Ascending aorta (tissue), 2 donors: ENCODE measurements at regions of chr12 and their contacts with region 1.

Region 1: GRCh38 chr12:53352331-53353256 is 16.4 kb upstream of the SP7 start:
- DNase-seq: peak; percentile 24 to 90
- H3K4me3 ChIP-seq: no peak overlapping the region
- H3K27ac ChIP-seq: no peak overlapping the region
- H3K4me1 ChIP-seq: no peaks in the 10 kb centered on the region
- H3K27me3 ChIP-seq: no peaks in the 10 kb centered on the region
- CTCF ChIP-seq: peak; percentile 81 to 87 (median 86)

Region 2: DNA sequence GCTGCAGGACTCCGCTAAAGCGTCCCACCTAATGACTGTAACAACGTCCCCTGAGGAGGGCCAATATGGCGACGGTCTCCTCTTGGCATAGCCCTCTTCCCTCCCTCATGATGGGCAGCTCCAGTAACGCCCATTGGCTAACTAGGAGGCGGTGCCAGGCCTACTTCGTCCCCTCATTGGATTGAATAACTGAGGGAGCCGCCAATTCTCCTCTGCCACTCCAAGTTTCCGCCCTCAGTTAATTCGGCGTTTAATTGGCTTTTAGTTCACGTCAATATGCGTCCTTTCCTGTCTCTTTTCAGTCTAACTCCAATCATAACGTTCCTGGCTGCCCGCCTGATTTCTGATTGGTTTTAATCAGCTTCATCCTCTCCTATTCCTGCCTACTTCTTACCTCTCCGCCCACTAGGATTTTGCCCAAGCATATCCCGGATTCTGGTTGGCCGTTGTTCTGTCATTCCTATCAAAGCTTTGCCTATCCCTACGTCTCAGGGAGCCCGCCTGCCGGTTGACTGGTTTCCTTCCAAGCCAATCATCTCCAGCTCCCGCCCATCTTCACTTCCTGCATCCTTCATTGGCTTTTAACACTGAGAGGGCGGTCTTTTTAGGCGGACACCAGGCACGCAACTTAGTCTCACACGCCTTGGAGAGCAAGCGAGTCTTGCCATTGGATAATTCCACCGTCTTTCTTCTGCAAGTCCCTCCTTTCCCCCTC is 27.0 kb after region 1 on chr12:
- intact Hi-C with region 1: loop called (anchors 2 kb)
- DNase-seq: peak; percentile 100
- H3K4me3 ChIP-seq: peak overlapping the region; percentile 86 to 87
- H3K27ac ChIP-seq: peak overlapping the region; percentile 95 to 99
- H3K4me1 ChIP-seq: peaks cover 23 to 37% of the 10 kb centered on the region in 2 donors
- H3K27me3 ChIP-seq: no peaks in the 10 kb centered on the region
- CTCF ChIP-seq: no peak

Region 3: GRCh38 chr12:53424626-53425514 is 72.3 kb after region 1 on chr12:
- intact Hi-C with region 1: loop called (anchors 1 kb)
- DNase-seq: no peak
- H3K4me3 ChIP-seq: peak overlapping the region in 1 of 2 donors; percentile 3
- H3K27ac ChIP-seq: no peak overlapping the region
- H3K4me1 ChIP-seq: no peaks in the 10 kb centered on the region
- H3K27me3 ChIP-seq: no peaks in the 10 kb centered on the region
- CTCF ChIP-seq: no peak

Region 4: DNA sequence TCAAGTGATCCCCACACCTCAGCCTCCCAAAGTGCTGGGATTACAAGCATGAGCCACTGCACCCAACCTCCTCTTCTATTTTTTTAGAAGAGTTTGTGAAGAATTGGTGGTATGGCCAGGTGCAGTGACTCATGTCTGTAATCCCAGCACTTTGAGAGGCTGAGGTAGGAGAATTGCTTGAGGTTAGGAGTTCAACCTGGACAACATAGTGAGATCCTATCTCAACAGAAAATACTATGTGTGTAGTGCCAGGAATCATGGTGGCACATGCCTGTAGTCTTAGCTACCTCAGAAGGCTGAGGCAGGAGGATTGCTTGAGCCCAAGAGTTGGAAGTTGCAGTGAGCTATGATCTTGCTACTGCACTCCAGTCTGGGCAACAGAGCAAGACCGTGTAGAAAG is 279.1 kb after region 1 on chr12:
- intact Hi-C with region 1: no loop called
- DNase-seq: no peak
- H3K4me3 ChIP-seq: no peak overlapping the region
- H3K27ac ChIP-seq: no peak overlapping the region
- H3K4me1 ChIP-seq: peaks cover 0 to 4% of the 10 kb centered on the region in 2 donors
- H3K27me3 ChIP-seq: no peaks in the 10 kb centered on the region
- CTCF ChIP-seq: no peak